Naive thymus-derived CD4-positive, alpha-beta T cell (primary cell): ENCODE measurements at regions of chr17 and their contacts with region 1.

Region 1: DNA sequence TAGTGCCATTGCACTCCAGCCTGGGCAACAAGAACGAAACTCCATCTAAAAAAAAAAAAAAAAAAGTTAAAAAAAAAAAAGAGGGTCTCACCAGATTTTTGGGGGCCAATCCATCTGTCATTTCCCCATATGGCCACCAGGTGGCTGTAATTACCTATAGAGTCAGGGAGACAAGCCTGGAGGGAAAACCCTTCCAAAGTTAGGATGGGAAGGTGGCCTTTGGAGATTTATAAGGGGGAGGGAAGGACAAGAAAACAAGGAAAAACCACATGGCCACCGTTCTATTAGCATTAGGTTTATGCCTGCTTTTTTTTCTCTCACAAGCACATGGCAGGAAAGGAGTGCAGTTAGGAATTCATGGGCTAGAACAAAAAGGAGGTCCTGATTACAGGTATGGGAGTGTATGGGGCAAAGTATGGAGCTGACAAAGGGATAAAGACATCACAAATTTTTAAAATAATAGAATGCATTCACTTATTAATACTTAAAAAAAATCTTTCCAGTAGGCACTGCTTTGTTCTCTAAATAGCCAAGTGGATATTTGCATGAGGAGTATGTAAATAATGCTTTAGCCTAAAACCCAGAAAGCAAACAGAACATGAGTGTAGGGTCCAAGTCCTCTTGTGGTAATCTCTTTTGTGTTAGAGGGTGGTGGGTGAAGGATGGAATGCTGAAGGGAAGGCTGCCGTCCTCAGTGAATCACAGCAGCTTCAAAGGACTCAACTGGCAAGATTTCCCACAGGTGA is 5.1 kb downstream of the CYB5D1 start:
- DNase-seq: peak in 3 of 9 donors; percentile 48 to 53 (median 49)
- ATAC-seq: no peak
- H3K4me3 ChIP-seq: no peak overlapping the region
- H3K4me3 Mint-ChIP-seq: no peak overlapping the region
- H3K27ac ChIP-seq: no peak overlapping the region
- H3K27ac Mint-ChIP-seq: peak overlapping the region in 1 of 9 donors; percentile 60
- H3K4me1 ChIP-seq: peaks cover 17 to 19% of the 10 kb centered on the region in 2 donors
- H3K4me1 Mint-ChIP-seq: peaks cover 16 to 32% (median 27%) of the 10 kb centered on the region in 7 donors
- H3K27me3 ChIP-seq: no peaks in the 10 kb centered on the region
- H3K27me3 Mint-ChIP-seq: no peaks in the 10 kb centered on the region

Region 2: DNA sequence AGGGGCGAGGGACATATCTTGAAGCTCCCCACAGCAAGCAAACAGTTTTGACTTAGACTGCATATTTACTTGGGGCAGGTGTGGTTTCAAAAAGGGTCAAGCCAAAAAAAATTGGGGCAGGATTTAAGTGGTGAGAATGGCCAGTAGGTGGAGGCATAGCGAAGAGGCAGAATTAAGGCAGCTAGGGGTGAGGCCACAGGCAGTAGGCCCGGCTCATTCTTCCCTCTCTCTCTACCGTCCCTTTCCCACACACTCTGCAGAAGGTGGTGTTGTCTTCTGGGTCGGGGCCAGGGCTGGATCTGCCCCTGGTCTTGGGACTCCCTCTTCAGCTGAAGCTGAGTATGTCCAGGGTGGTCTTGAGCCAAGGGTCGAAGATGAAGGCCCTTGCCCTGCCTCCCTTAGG is 230.4 kb before region 1 on chr17:
- CTCF ChIA-PET with region 1: no interaction called
- POLR2A ChIA-PET with region 1: no interaction called
- intact Hi-C with region 1: no loop called
- DNase-seq: peak in 4 of 9 donors; percentile 11 to 39 (median 28)
- ATAC-seq: peak; percentile 54
- H3K4me3 ChIP-seq: no peak overlapping the region
- H3K4me3 Mint-ChIP-seq: peak overlapping the region in 1 of 10 donors; percentile 30
- H3K27ac ChIP-seq: no peak overlapping the region
- H3K27ac Mint-ChIP-seq: peak overlapping the region in 1 of 9 donors; percentile 48
- H3K4me1 ChIP-seq: no peaks in the 10 kb centered on the region
- H3K4me1 Mint-ChIP-seq: peaks cover 0 to 7% (median 4%) of the 10 kb centered on the region in 7 donors
- H3K27me3 ChIP-seq: no peaks in the 10 kb centered on the region
- H3K27me3 Mint-ChIP-seq: peaks cover 0 to 2% (median 0%) of the 10 kb centered on the region in 5 donors

Region 3: GRCh38 chr17:7882068-7882467 is 19.2 kb after region 1 on chr17:
- CTCF ChIA-PET with region 1: interaction called, 12 read pairs
- POLR2A ChIA-PET with region 1: interaction called, 14 read pairs
- intact Hi-C with region 1: loop called in 1 of 2 experiments (anchors 1 kb)
- DNase-seq: no peak
- ATAC-seq: no peak
- H3K4me3 ChIP-seq: no peak overlapping the region
- H3K4me3 Mint-ChIP-seq: no peak overlapping the region
- H3K27ac ChIP-seq: peak overlapping the region; percentile 60
- H3K27ac Mint-ChIP-seq: no peak overlapping the region
- H3K4me1 ChIP-seq: peaks cover 12 to 35% of the 10 kb centered on the region in 2 donors
- H3K4me1 Mint-ChIP-seq: peaks cover 0 to 7% (median 4%) of the 10 kb centered on the region in 7 donors
- H3K27me3 ChIP-seq: no peaks in the 10 kb centered on the region
- H3K27me3 Mint-ChIP-seq: no peaks in the 10 kb centered on the region

Region 4: GRCh38 chr17:7897773-7898172 is 34.9 kb after region 1 on chr17:
- CTCF ChIA-PET with region 1: interaction called, 10 read pairs
- POLR2A ChIA-PET with region 1: interaction called, 6 read pairs
- intact Hi-C with region 1: loop called (anchors 1 kb)
- DNase-seq: peak in 4 of 9 donors; percentile 33 to 42 (median 36)
- ATAC-seq: peak; percentile 75
- H3K4me3 ChIP-seq: no peak overlapping the region
- H3K4me3 Mint-ChIP-seq: no peak overlapping the region
- H3K27ac ChIP-seq: no peak overlapping the region
- H3K27ac Mint-ChIP-seq: peak overlapping the region in 8 of 9 donors; percentile 0 to 92 (median 78)
- H3K4me1 ChIP-seq: no peaks in the 10 kb centered on the region
- H3K4me1 Mint-ChIP-seq: peaks cover 8 to 27% (median 15%) of the 10 kb centered on the region in 7 donors
- H3K27me3 ChIP-seq: no peaks in the 10 kb centered on the region
- H3K27me3 Mint-ChIP-seq: no peaks in the 10 kb centered on the region

Region 5: GRCh38 chr17:8041249-8041928 is 178.5 kb after region 1 on chr17:
- CTCF ChIA-PET with region 1: interaction called, 3 read pairs
- POLR2A ChIA-PET with region 1: no interaction called
- intact Hi-C with region 1: loop called (anchors 1 to 5 kb)
- DNase-seq: peak in 7 of 9 donors; percentile 18 to 56 (median 47)
- ATAC-seq: peak; percentile 69
- H3K4me3 ChIP-seq: no peak overlapping the region
- H3K4me3 Mint-ChIP-seq: no peak overlapping the region
- H3K27ac ChIP-seq: no peak overlapping the region
- H3K27ac Mint-ChIP-seq: no peak overlapping the region
- H3K4me1 ChIP-seq: no peaks in the 10 kb centered on the region
- H3K4me1 Mint-ChIP-seq: peaks cover 0 to 16% (median 0%) of the 10 kb centered on the region in 7 donors
- H3K27me3 ChIP-seq: peaks cover 0 to 13% of the 10 kb centered on the region in 2 donors
- H3K27me3 Mint-ChIP-seq: peaks cover 18 to 30% (median 23%) of the 10 kb centered on the region in 5 donors